ENCODE measurements at regions of chr12 and their contacts with region 1.

Region 1: DNA sequence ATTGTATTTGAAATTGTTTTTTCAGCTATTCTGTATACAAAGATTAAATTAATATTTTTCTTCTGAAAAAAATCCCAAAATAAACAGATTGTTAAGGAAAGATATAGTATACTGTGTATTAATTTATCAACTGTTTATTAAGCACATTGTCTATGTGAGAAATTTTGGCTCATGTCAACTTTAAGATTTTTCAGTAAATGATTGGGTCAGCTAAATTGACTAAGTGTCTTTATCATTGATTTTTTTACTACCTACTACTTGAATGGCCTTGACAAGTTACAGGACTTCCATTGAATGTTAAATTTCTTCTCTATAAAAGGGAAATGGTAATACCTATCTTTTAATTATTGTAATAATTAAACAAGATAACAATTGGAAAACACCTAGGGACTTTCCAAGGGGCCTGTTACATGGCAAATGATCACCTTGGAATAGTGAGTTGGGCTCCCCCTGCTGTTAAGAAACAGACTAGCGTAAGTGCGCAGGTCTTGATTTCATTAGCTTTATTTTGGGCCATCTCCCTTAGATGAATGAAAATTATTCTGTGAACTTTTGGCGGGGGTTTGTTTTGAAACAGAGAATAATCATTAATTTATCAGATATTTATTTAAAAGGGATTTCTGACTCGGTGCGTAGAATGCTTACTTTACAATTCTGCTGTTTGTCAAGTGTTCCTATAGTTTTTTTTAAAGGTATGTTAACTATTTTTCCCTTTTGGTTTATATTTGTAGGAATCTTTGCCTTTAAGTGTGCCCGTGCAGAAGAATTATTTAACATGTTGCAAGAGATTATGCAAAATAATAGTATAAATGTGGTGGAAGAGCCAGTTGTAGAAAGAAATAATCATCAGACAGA is 14.5 kb upstream of the CCT2 start:
- DNase-seq: peak in 3 of 6 donors; percentile 24 to 57 (median 43)
- ATAC-seq: peak; percentile 78 to 94 (median 92)
- H3K4me3 ChIP-seq: no peak overlapping the region
- H3K27ac ChIP-seq: peak overlapping the region in 1 of 4 donors; percentile 7
- H3K4me1 ChIP-seq: peaks cover 0 to 11% (median 10%) of the 10 kb centered on the region in 3 donors
- H3K27me3 ChIP-seq: no peaks in the 10 kb centered on the region
- CTCF ChIP-seq: peak; percentile 30 to 66 (median 60)

Region 2: GRCh38 chr12:69290545-69291277 is 280.1 kb before region 1 on chr12:
- intact Hi-C with region 1: loop called in 1 of 3 experiments (anchors 10 kb)
- DNase-seq: peak; percentile 77 to 87 (median 81)
- ATAC-seq: peak; percentile 98 to 100 (median 100)
- H3K4me3 ChIP-seq: no peak overlapping the region
- H3K27ac ChIP-seq: no peak overlapping the region
- H3K4me1 ChIP-seq: no peaks in the 10 kb centered on the region
- H3K27me3 ChIP-seq: no peaks in the 10 kb centered on the region
- CTCF ChIP-seq: peak; percentile 86 to 98 (median 96)

Region 3: GRCh38 chr12:69359531-69360347 is 211.0 kb before region 1 on chr12 and contains the start of gene YEATS4:
- intact Hi-C with region 1: no loop called
- DNase-seq: peak; percentile 93 to 97 (median 95)
- ATAC-seq: peak; percentile 89 to 96 (median 90)
- H3K4me3 ChIP-seq: peak within 1 kb of the TSS; percentile 51 to 82 (median 75)
- H3K27ac ChIP-seq: peak within 1 kb of the TSS; percentile 96 to 99 (median 97)
- H3K4me1 ChIP-seq: peaks cover 0 to 16% (median 6%) of the 10 kb centered on the region in 3 donors
- H3K27me3 ChIP-seq: no peaks in the 10 kb centered on the region
- CTCF ChIP-seq: no peak
- total RNA-seq, gene YEATS4: 8.3 to 14.6 (median 10.6) TPM

Region 4: GRCh38 chr12:69415471-69416275 is 155.1 kb before region 1 on chr12:
- intact Hi-C with region 1: loop called in 2 of 3 experiments (anchors 10 kb)
- DNase-seq: peak in 4 of 6 donors; percentile 21 to 58 (median 26)
- ATAC-seq: peak; percentile 86 to 97 (median 94)
- H3K4me3 ChIP-seq: peak overlapping the region in 1 of 4 donors; percentile 0
- H3K27ac ChIP-seq: no peak overlapping the region
- H3K4me1 ChIP-seq: no peaks in the 10 kb centered on the region
- H3K27me3 ChIP-seq: no peaks in the 10 kb centered on the region
- CTCF ChIP-seq: peak; percentile 50 to 66 (median 52)

Region 5: DNA sequence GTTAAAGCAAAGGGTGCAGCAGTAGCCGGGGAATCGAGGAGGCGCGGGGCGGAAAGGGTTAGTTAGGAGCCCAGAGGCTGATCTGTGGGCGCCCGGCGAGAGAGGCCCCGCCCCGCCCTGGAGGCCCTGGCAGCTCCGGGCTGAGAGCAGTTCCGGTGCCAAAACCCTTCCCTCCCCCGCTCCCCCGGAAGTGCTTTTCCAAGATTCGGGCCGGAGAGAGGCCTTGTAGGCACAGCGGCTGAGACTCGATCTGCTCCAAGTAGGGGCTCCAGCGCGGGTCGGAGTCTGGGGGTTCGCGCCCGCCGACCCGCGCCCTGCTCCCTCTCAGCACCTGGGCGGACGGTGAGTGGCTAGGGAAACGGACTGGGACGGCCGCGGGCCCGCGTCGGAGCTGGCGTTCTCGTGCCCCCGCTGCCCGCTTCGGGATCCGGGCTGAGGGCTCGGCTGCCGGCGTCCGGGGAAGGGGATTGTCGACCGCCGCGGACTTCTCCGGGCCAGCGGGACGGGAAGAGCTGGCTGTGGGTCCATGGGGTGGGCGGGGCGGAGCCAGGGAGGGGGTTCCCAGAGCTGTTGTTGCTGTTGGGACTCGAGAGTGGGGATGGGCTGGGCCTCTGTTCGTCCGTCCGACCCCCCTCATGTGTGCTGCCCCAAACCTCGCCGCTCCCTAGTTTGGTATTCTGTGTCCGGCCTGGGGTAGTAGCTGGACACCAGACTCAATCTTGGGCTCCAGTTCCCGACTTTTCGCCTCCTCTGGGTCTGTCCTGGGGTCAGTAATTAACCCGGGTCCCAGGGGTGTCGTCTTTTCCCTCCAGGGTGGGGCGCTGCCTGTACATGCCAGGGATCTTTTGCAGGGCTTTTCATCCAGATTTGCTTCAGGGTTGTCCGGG is 100.3 kb before region 1 on chr12 and contains the start of gene FRS2:
- intact Hi-C with region 1: no loop called
- DNase-seq: peak; percentile 90 to 95 (median 90)
- ATAC-seq: peak; percentile 99 to 100 (median 100)
- H3K4me3 ChIP-seq: peak within 1 kb of the TSS; percentile 73 to 83 (median 76)
- H3K27ac ChIP-seq: peak within 1 kb of the TSS; percentile 77 to 89 (median 84)
- H3K4me1 ChIP-seq: peaks cover 6 to 37% (median 28%) of the 10 kb centered on the region in 3 donors
- H3K27me3 ChIP-seq: no peaks in the 10 kb centered on the region
- CTCF ChIP-seq: no peak
- total RNA-seq, gene FRS2: 7.9 to 23.2 (median 13.1) TPM

Measured in pancreas (tissue), 10 donors.